ENCODE measurements at regions of chr2 and their contacts with region 1.

Region 1: DNA sequence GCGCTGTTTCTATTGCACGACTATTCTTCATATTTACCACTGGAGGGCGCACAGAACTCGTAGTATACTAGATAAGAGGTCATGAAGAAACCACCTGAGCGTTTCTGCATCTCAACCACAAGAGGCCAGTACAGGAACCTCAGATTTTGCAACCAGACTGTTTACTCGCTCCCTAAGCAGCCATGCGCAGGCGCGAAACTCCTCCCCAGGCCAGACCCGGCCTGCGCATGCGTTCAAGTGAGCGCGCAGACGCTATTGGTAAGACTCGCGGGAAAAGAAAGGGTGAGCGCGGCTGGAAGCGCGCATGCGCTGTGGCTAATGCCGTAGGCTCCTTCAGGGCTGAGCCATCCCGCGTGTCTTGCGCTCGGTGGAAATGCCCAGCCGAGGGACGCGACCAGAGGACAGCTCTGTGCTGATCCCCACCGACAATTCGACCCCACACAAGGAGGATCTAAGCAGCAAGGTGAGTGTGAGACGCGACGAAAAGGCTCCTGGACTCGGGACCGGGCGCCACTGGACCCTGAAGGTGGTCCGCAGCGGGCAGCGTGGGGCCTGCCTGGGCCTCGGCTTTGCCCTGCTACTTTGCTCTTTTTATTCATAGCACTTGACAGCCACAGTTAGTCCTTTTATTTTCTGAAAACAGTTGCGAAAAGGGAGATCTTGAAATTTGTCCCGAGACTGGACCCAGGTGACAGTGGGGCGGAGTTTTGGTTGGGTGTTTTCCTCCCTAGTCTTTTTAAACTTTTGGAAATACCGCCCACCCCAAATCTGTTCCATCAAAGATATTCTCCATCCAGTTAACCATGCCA is at the start of gene ASNSD1:
- DNase-seq: peak; percentile 100
- ATAC-seq: peak; percentile 94 to 97
- total RNA-seq, gene ASNSD1: 28.1 to 29.9 TPM

Region 2: DNA sequence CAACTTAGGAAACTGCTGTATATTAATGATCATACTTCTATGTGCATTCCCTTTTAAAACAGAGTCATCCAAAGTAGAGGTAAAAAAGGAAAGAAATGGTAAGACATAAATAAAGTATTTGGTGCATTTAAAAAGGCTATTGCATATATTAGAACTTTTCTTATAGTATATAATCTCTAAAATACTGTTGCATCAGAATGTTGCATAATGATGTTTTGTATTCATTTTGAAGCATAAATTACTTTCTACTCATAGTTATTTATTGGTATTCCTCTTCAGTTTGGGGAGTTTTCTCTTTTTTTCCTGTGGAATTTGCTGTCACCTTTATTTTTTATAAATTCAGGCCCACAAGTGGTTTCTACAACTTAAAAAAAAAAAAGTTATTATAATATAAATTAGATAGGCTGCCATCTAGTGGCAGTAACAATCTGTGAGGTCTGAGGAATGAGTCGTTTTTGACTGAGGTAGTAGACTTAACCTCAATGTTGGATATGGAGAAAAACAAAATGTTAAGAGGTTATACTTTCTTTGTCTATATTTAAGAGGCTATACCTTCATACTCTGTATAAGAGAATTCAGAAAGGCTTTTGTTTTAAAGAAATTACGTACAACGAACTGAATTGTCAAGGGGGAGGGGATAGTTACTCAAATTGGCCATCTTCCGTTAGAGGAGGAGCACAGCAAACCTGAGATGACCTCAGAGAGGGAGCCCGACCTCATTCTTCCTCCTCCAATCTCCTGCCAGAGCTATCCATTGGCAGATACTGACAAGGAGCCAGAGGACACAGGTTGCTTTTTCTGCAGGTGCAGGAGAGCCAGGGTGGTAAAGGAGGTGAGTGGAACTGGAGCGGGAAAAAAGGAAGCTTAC is 36.9 kb after region 1 on chr2:
- intact Hi-C with region 1: loop called (anchors 2 to 5 kb)
- DNase-seq: no peak
- ATAC-seq: peak; percentile 78 to 85

Region 3: DNA sequence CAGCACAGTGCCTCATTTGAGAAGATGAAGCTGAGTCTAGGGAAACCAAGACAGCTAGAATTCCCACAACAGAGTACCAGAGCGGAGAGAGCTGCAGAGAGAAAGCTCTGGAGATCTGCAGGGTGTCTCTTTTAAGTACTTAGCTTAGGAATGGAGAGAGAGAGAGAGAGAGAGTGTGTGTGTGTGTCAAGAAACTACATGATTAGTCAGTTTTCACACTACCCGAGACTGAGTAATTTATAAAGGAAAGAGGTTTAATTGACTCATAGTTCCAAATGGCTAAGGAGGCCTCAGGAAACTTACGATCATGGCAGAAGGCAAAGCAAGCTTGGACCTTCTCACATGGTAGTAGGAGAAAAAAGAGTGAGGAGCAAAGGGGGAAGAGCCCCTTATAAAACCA is 594.3 kb after region 1 on chr2:
- intact Hi-C with region 1: no loop called
- DNase-seq: no peak
- ATAC-seq: no peak

Measured in left cardiac atrium (tissue), 4 donors.